ENCODE measurements at regions of chr4 and their contacts with region 1.

Region 1: GRCh38 chr4:140800666-140801065 is 44.5 kb upstream of the TBC1D9 start:
- DNase-seq: no peak
- ATAC-seq: peak; percentile 70
- H3K4me3 Mint-ChIP-seq: peak overlapping the region; percentile 56
- H3K27ac Mint-ChIP-seq: peak overlapping the region; percentile 79
- H3K4me1 Mint-ChIP-seq: peaks cover 87% of the 10 kb centered on the region
- H3K27me3 Mint-ChIP-seq: no peaks in the 10 kb centered on the region
- CTCF ChIP-seq: no peak

Region 2: GRCh38 chr4:139560406-139561104 is 1240.1 kb before region 1 on chr4:
- CTCF ChIA-PET with region 1: no interaction called
- POLR2A ChIA-PET with region 1: interaction called, 12 read pairs
- intact Hi-C with region 1: no loop called
- DNase-seq: peak; percentile 18
- ATAC-seq: peak; percentile 50
- H3K4me3 Mint-ChIP-seq: peak overlapping the region; percentile 81
- H3K27ac Mint-ChIP-seq: peak overlapping the region; percentile 97
- H3K4me1 Mint-ChIP-seq: peaks cover 32% of the 10 kb centered on the region
- H3K27me3 Mint-ChIP-seq: no peaks in the 10 kb centered on the region
- CTCF ChIP-seq: no peak

Region 3: DNA sequence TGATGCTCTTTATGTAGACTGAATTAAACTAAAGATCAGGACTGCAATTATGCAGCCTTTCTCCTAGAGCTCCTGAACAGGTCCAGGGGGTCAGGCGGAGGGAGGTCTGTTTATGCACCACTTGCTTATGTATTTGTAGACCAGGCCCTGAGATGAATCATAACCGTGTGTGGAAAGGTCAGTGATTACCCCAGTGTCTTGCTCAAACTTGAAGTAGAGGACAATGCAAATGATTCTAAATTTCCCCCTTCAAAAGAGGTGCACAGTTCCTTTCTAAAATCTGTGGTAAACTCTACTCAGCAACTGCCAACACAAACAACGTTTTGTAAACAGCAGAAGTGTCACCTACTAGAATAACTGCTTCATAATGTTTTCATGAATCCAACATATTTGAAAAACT is 31.5 kb before region 1 on chr4:
- CTCF ChIA-PET with region 1: no interaction called
- POLR2A ChIA-PET with region 1: interaction called, 10 read pairs
- intact Hi-C with region 1: no loop called
- DNase-seq: no peak
- ATAC-seq: no peak
- H3K4me3 Mint-ChIP-seq: no peak overlapping the region
- H3K27ac Mint-ChIP-seq: peak overlapping the region; percentile 60
- H3K4me1 Mint-ChIP-seq: peaks cover 23% of the 10 kb centered on the region
- H3K27me3 Mint-ChIP-seq: no peaks in the 10 kb centered on the region
- CTCF ChIP-seq: no peak